ENCODE measurements at regions of chr1 and their contacts with region 1.

Region 1: GRCh38 chr1:227934476-227935313 is 13.0 kb downstream of the WNT9A start:
- DNase-seq: no peak
- ATAC-seq: peak; percentile 38 to 90 (median 54)
- H3K4me3 ChIP-seq: no peak overlapping the region
- H3K27ac ChIP-seq: peak overlapping the region in 7 of 10 donors; percentile 33 to 63 (median 49)
- H3K4me1 ChIP-seq: peaks cover 0 to 11% (median 0%) of the 10 kb centered on the region in 9 donors
- H3K27me3 ChIP-seq: no peaks in the 10 kb centered on the region
- CTCF ChIP-seq: no peak

Region 2: DNA sequence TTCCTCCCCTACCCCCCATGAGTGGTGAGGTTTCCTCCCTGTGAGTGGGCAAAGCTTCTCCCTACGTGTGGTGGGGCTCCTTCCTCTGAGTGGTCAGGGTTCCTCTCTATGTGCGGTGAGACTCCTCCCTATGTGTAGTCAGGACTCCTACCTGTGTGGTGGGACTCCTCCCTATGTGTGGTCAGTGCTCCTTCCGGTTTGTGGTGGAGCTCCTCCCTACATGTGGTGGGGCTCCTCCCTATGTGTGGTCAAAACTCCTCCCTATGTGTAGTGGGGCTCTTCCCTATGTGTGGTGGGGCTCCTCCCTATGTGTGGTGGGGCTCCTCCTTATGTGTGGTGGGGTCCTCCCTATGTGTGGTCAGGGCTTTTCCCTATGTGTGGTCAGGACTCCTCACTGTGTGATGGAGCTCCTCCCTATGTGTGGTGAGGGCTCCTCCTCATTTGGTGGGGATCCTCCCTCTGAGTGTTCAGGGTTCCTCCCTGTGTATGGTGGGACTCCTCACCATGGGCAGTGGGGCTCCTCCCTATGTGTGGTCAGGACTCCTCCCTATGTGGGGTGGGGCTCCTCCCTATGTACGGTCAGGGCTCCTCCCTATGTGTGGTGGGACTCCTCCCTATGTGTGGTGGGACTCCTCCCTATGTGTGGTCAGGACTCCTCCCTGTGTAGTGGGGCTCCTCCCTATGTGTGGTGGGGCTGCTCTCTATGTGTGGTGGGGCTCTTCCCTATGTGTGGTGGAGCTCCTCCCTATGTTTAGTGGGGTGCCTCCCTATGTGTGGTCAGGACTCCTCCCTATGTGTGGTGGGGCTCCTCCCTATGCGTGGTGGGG is 90.2 kb before region 1 on chr1:
- intact Hi-C with region 1: loop called in 1 of 10 experiments (anchors 10 kb)
- DNase-seq: no peak
- ATAC-seq: no peak
- H3K4me3 ChIP-seq: no peak overlapping the region
- H3K27ac ChIP-seq: no peak overlapping the region
- H3K4me1 ChIP-seq: no peaks in the 10 kb centered on the region
- H3K27me3 ChIP-seq: peaks cover 0 to 9% (median 0%) of the 10 kb centered on the region in 7 donors
- CTCF ChIP-seq: no peak

Region 3: DNA sequence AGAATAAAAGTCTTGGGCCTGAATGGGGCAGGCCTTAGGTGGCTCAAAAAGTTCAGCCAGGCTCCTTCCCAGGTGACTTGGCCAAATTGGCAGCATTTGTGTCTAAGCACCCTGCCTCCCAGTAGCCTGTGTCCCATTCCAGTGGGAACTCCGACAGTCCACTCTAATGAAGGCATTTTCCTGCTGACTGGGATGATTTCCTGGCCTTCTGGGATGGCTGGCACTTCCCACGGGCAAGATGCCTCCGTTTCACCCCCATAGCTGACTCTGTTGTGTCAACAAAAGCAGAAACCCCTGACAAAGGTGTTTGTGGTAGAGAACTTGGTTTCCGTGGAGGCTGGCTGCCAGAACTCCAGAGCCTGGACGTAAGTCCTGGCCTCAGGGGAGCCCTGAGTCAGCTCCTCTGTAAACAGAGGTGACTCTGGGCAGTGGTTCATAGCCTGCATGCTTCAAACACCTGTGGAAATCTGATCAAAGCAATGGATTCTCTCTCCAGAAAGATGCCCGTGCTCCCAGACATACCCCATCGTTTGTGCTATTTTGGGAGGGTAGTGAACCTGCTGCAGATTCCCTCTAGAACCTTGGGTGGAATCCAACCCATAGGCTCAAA is 108.7 kb after region 1 on chr1:
- intact Hi-C with region 1: no loop called
- DNase-seq: no peak
- ATAC-seq: no peak
- H3K4me3 ChIP-seq: no peak overlapping the region
- H3K27ac ChIP-seq: no peak overlapping the region
- H3K4me1 ChIP-seq: no peaks in the 10 kb centered on the region
- H3K27me3 ChIP-seq: peaks cover 0 to 36% (median 19%) of the 10 kb centered on the region in 7 donors
- CTCF ChIP-seq: no peak

Region 4: DNA sequence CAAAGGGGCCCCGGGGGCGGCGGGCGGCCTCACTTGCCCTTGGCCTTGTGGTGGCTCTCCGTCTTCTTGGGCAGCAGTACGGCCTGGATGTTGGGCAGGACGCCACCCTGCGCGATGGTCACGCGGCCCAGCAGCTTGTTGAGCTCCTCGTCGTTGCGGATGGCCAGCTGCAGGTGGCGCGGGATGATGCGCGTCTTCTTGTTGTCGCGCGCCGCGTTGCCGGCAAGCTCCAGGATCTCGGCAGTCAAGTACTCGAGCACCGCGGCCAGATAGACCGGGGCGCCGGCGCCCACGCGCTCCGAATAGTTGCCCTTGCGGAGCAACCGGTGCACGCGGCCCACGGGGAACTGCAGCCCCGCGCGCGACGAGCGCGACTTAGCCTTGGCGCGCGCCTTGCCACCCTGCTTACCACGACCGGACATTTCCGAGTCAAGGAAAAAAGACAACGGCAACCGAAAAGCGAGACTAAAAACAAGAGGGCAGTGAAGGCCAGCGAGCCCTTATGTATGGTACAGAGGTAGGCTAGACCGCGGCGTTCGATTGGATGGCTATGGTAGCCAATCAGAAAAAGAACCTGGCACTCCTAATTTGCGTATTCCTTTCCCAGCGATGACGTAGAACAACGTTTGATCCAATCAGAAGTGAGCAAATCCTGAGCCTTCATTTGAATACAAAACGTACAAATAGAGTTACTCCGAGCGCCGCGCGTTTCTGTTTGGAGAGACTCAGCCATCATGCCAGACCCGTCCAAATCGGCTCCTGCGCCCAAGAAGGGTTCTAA is 522.9 kb after region 1 on chr1:
- intact Hi-C with region 1: no loop called
- DNase-seq: peak; percentile 84 to 93
- ATAC-seq: peak; percentile 94 to 97 (median 95)
- H3K4me3 ChIP-seq: peak overlapping the region; percentile 44 to 77 (median 62)
- H3K27ac ChIP-seq: peak overlapping the region; percentile 55 to 93 (median 86)
- H3K4me1 ChIP-seq: peaks cover 3 to 56% (median 36%) of the 10 kb centered on the region in 9 donors
- H3K27me3 ChIP-seq: peaks cover 0 to 50% (median 33%) of the 10 kb centered on the region in 7 donors
- CTCF ChIP-seq: peak in 7 of 9 donors; percentile 25 to 58 (median 43)

Measured in heart right ventricle (tissue), 16 donors.